Naive thymus-derived CD8-positive, alpha-beta T cell (primary cell): ENCODE measurements at regions of chr15 and their contacts with region 1.

Region 1: GRCh38 chr15:49155110-49155833 is at the start of gene COPS2:
- DNase-seq: peak; percentile 74 to 97 (median 94)
- ATAC-seq: peak; percentile 92 to 93
- H3K4me3 Mint-ChIP-seq: peak within 1 kb of the TSS; percentile 98 to 100 (median 99)
- H3K27ac Mint-ChIP-seq: peak within 1 kb of the TSS; percentile 94 to 100 (median 99)
- H3K4me1 Mint-ChIP-seq: peaks cover 9 to 64% (median 52%) of the 10 kb centered on the region in 4 donors
- H3K27me3 Mint-ChIP-seq: no peaks in the 10 kb centered on the region
- polyA plus RNA-seq, gene COPS2: 26.2 to 32.4 (median 28.1) TPM

Region 2: GRCh38 chr15:48877630-48878595 is 277.4 kb before region 1 on chr15 and contains the start of gene EID1:
- POLR2A ChIA-PET with region 1: interaction called, 19 read pairs
- DNase-seq: peak; percentile 85 to 93 (median 89)
- ATAC-seq: peak; percentile 93 to 95
- H3K4me3 Mint-ChIP-seq: peak within 1 kb of the TSS; percentile 96 to 100 (median 98)
- H3K27ac Mint-ChIP-seq: peak within 1 kb of the TSS; percentile 95 to 99 (median 98)
- H3K4me1 Mint-ChIP-seq: peaks cover 10 to 32% (median 19%) of the 10 kb centered on the region in 4 donors
- H3K27me3 Mint-ChIP-seq: peaks cover 0 to 18% (median 15%) of the 10 kb centered on the region in 5 donors
- polyA plus RNA-seq, gene EID1: 117 to 172 (median 160) TPM

Region 3: GRCh38 chr15:49046220-49047102 is 108.8 kb before region 1 on chr15 and contains the start of gene SECISBP2L:
- POLR2A ChIA-PET with region 1: interaction called, 23 read pairs
- DNase-seq: peak; percentile 78 to 95 (median 88)
- ATAC-seq: peak; percentile 91
- H3K4me3 Mint-ChIP-seq: peak within 1 kb of the TSS; percentile 89 to 97 (median 96)
- H3K27ac Mint-ChIP-seq: peak within 1 kb of the TSS; percentile 87 to 96 (median 95)
- H3K4me1 Mint-ChIP-seq: peaks cover 14 to 44% (median 32%) of the 10 kb centered on the region in 4 donors
- H3K27me3 Mint-ChIP-seq: no peaks in the 10 kb centered on the region
- polyA plus RNA-seq, gene SECISBP2L: 17.6 to 25.2 (median 22.7) TPM

Region 4: GRCh38 chr15:49088996-49089395 is 66.3 kb before region 1 on chr15:
- POLR2A ChIA-PET with region 1: no interaction called
- DNase-seq: no peak
- ATAC-seq: no peak
- H3K4me3 Mint-ChIP-seq: no peak overlapping the region
- H3K27ac Mint-ChIP-seq: no peak overlapping the region
- H3K4me1 Mint-ChIP-seq: no peaks in the 10 kb centered on the region
- H3K27me3 Mint-ChIP-seq: no peaks in the 10 kb centered on the region

Region 5: DNA sequence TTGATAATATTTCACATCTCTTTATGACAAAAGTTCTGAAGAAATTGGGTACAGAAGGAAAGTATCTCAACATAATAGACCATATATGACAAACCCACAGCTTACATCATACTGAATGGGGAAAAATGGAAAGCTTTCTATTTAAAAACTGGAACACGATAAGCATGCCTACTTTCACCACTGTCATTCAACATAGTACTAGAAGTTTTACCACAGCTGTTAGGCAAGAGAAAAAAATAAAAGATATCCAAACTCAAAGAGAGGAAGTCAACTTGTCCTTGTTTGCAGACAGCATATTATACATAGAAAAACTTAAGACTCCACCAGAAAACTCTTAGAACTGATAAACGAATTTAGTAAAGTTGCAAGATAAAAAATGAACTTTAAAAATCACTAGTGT is 40.2 kb before region 1 on chr15:
- POLR2A ChIA-PET with region 1: no interaction called
- DNase-seq: no peak
- ATAC-seq: no peak
- H3K4me3 Mint-ChIP-seq: no peak overlapping the region
- H3K27ac Mint-ChIP-seq: no peak overlapping the region
- H3K4me1 Mint-ChIP-seq: peaks cover 0 to 6% (median 1%) of the 10 kb centered on the region in 4 donors
- H3K27me3 Mint-ChIP-seq: no peaks in the 10 kb centered on the region

Region 6: GRCh38 chr15:49169880-49170597 is 14.8 kb after region 1 on chr15 and contains the start of gene GALK2:
- POLR2A ChIA-PET with region 1: interaction called, 34 read pairs
- DNase-seq: peak; percentile 57 to 83 (median 74)
- ATAC-seq: peak; percentile 95 to 97
- H3K4me3 Mint-ChIP-seq: peak within 1 kb of the TSS; percentile 94 to 100 (median 95)
- H3K27ac Mint-ChIP-seq: peak within 1 kb of the TSS; percentile 94 to 99 (median 96)
- H3K4me1 Mint-ChIP-seq: peaks cover 17 to 44% (median 38%) of the 10 kb centered on the region in 4 donors
- H3K27me3 Mint-ChIP-seq: no peaks in the 10 kb centered on the region
- polyA plus RNA-seq, gene GALK2: 18.8 to 21.5 (median 19.3) TPM

Region 7: GRCh38 chr15:49620658-49621368 is 465.5 kb after region 1 on chr15 and contains the starts of genes DTWD1 and FAM227B:
- POLR2A ChIA-PET with region 1: interaction called, 13 read pairs
- DNase-seq: peak; percentile 87 to 96 (median 92)
- ATAC-seq: peak; percentile 95 to 96
- H3K4me3 Mint-ChIP-seq: peak within 1 kb of the TSS; percentile 92 to 99 (median 98)
- H3K27ac Mint-ChIP-seq: peak within 1 kb of the TSS; percentile 97 to 99 (median 98)
- H3K4me1 Mint-ChIP-seq: peaks cover 14 to 54% (median 48%) of the 10 kb centered on the region in 4 donors
- H3K27me3 Mint-ChIP-seq: peaks cover 0 to 2% (median 0%) of the 10 kb centered on the region in 5 donors
- polyA plus RNA-seq, gene DTWD1: 22.0 to 25.6 (median 22.0) TPM
- polyA plus RNA-seq, gene FAM227B: 23.8 to 28.7 (median 27.6) TPM